A673 (cell line): ENCODE measurements at regions of chr12 and their contacts with region 1.

Region 1: GRCh38 chr12:39227261-39227660 is 215.7 kb downstream of the KIF21A start:
- DNase-seq: peak; percentile 97
- H3K4me3 ChIP-seq: no peak overlapping the region
- H3K27ac ChIP-seq: peak overlapping the region; percentile 32
- H3K4me1 ChIP-seq: peaks cover 31% of the 10 kb centered on the region
- H3K27me3 ChIP-seq: no peaks in the 10 kb centered on the region
- CTCF ChIP-seq: no peak

Region 2: DNA sequence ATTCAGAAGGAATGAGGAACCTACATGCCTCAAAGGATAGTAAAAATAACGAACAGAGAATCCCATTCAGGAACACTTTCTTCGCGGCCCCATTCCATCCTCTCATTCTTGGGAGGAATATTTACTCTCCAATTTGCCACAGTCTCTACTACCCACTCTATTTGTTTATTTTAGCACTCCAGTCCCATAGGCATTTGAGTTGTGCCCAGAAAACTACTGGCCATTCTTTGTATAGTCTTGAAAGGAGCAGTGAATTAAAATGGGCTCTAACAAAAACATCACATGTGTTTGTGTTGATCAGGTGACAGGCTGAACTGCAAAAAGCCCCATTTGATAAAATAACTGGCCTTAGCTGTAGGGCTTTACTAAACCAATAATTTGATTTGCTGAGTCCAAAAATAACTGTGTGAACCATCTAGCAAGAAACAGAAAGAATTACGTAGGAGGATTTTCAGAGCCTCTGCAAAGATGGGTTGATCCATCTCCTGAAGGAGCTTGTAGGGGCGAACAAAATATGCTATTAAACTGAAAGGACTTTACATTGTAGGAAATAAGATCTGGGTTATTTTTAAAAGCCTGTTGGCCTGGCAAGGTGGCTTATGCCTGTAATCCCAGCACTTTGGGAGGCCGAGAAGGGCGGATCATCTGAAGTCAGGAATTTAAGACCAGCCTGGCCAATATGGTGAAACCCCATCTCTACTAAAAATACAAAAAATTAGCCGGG is 179.6 kb before region 1 on chr12:
- CTCF ChIA-PET with region 1: no interaction called
- POLR2A ChIA-PET with region 1: no interaction called
- intact Hi-C with region 1: loop called (anchors 10 kb)
- DNase-seq: no peak
- H3K4me3 ChIP-seq: no peak overlapping the region
- H3K27ac ChIP-seq: no peak overlapping the region
- H3K4me1 ChIP-seq: peaks cover 11% of the 10 kb centered on the region
- H3K27me3 ChIP-seq: no peaks in the 10 kb centered on the region
- CTCF ChIP-seq: no peak

Region 3: GRCh38 chr12:39176356-39176755 is 50.9 kb before region 1 on chr12:
- CTCF ChIA-PET with region 1: no interaction called
- POLR2A ChIA-PET with region 1: no interaction called
- intact Hi-C with region 1: loop called (anchors 5 kb)
- DNase-seq: no peak
- H3K4me3 ChIP-seq: no peak overlapping the region
- H3K27ac ChIP-seq: no peak overlapping the region
- H3K4me1 ChIP-seq: peaks cover 16% of the 10 kb centered on the region
- H3K27me3 ChIP-seq: no peaks in the 10 kb centered on the region
- CTCF ChIP-seq: no peak

Region 4: DNA sequence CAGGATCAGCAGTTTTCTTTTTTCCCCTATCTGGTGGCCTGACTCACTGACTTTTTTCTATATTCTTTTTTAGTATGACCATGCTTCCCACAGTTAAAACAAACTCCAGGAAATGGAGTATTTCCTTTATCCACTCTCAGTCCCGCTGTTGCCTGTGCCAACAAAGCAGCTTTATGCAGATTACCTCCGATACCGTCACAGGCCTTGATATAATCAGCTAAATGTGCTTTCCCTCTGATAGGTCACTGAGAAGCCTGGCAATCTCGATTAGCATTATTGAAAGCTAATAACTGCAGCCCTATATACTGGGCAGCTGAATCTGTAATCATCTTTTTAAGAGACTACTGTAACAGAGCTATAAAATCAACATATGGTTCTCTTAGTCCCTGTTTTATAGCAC is 27.9 kb before region 1 on chr12:
- CTCF ChIA-PET with region 1: no interaction called
- POLR2A ChIA-PET with region 1: no interaction called
- intact Hi-C with region 1: loop called (anchors 1 kb)
- DNase-seq: peak; percentile 94
- H3K4me3 ChIP-seq: peak overlapping the region; percentile 6
- H3K27ac ChIP-seq: peak overlapping the region; percentile 83
- H3K4me1 ChIP-seq: peaks cover 10% of the 10 kb centered on the region
- H3K27me3 ChIP-seq: no peaks in the 10 kb centered on the region
- CTCF ChIP-seq: no peak

Region 5: DNA sequence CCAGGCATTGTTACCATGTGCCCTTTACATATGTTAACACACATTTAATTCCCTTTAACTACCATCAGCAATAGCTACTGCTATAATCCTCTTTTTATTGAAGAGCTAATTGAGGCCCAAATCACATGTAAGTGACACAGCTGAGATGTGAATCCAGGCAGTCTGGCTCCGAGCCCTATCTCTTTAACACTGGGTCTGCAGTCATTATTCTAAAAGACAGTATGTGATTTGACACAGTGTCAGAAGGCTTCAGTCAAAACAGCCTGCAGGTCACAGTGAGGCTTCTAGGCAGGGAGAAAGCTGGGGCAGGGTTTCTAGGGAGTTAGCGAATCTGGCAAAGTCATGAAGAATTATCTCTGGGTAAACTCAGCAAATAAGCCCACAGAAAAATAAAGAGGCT is 67.5 kb after region 1 on chr12:
- CTCF ChIA-PET with region 1: no interaction called
- POLR2A ChIA-PET with region 1: no interaction called
- intact Hi-C with region 1: no loop called
- DNase-seq: peak; percentile 3
- H3K4me3 ChIP-seq: no peak overlapping the region
- H3K27ac ChIP-seq: no peak overlapping the region
- H3K4me1 ChIP-seq: no peaks in the 10 kb centered on the region
- H3K27me3 ChIP-seq: no peaks in the 10 kb centered on the region
- CTCF ChIP-seq: no peak

Region 6: GRCh38 chr12:40312982-40313576 is 1085.8 kb after region 1 on chr12:
- CTCF ChIA-PET with region 1: no interaction called
- POLR2A ChIA-PET with region 1: no interaction called
- intact Hi-C with region 1: no loop called
- DNase-seq: peak; percentile 18
- H3K4me3 ChIP-seq: no peak overlapping the region
- H3K27ac ChIP-seq: no peak overlapping the region
- H3K4me1 ChIP-seq: peaks cover 3% of the 10 kb centered on the region
- H3K27me3 ChIP-seq: no peaks in the 10 kb centered on the region
- CTCF ChIP-seq: peak; percentile 72